H1 (cell line): ENCODE measurements at regions of chr6 and their contacts with region 1.

Region 1: DNA sequence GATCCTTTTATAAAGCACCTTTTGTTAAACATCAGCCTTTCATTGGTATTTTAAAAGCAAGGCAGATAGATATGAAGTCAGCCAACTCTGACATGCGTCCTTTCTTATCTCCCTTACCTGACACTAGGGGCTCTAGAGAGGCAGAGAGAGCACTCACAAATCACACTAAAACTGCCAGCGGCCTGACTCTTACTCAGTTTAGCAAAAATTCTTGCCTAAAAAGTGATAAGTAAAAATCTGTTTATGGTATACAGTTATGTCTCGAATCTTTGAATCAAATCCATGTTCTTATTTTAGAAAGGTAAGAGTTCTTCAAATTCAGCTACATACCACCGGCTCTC is 10.4 kb upstream of the TDRD6 start:
- DNase-seq: no peak
- H3K4me3 ChIP-seq: no peak overlapping the region
- H3K27ac ChIP-seq: no peak overlapping the region
- H3K4me1 ChIP-seq: no peaks in the 10 kb centered on the region
- H3K27me3 ChIP-seq: no peaks in the 10 kb centered on the region
- CTCF ChIP-seq: peak in 2 of 3 experiments; percentile 54 to 64; a peak in 3 of 4 replicates
- EP300 ChIP-seq: no peak
- POLR2A ChIP-seq: no peak
- RAD21 ChIP-seq: peak; percentile 34 to 50; a peak in 3 of 4 replicates

Region 2: GRCh38 chr6:46655803-46656202 is 21.5 kb before region 1 on chr6:
- CTCF ChIA-PET with region 1: interaction called, 14 read pairs
- POLR2A ChIA-PET with region 1: interaction called, 3 read pairs
- DNase-seq: peak in 1 of 2 experiments; percentile 69
- H3K4me3 ChIP-seq: no peak overlapping the region
- H3K27ac ChIP-seq: no peak overlapping the region
- H3K4me1 ChIP-seq: peaks cover 0 to 7% (median 2%) of the 10 kb centered on the region in 4 experiments; a peak in 2 of 7 replicates
- H3K27me3 ChIP-seq: peaks cover 0 to 5% (median 2%) of the 10 kb centered on the region in 4 experiments; a peak in 3 of 7 replicates
- CTCF ChIP-seq: peak; percentile 73 to 87 (median 73)
- EP300 ChIP-seq: no peak
- POLR2A ChIP-seq: no peak
- RAD21 ChIP-seq: peak; percentile 46 to 64

Region 3: GRCh38 chr6:46688117-46688965 is 11.1 kb after region 1 on chr6:
- CTCF ChIA-PET with region 1: interaction called, 15 read pairs
- POLR2A ChIA-PET with region 1: no interaction called
- DNase-seq: no peak
- H3K4me3 ChIP-seq: no peak overlapping the region
- H3K27ac ChIP-seq: no peak overlapping the region
- H3K4me1 ChIP-seq: no peaks in the 10 kb centered on the region
- H3K27me3 ChIP-seq: no peaks in the 10 kb centered on the region
- CTCF ChIP-seq: no peak
- EP300 ChIP-seq: no peak
- POLR2A ChIP-seq: no peak
- RAD21 ChIP-seq: no peak